ENCODE measurements at regions of chr4 and their contacts with region 1.

Region 1: GRCh38 chr4:76011700-76012387 is 4.5 kb upstream of the CXCL9 start:
- DNase-seq: peak; percentile 40
- H3K4me3 Mint-ChIP-seq: no peak overlapping the region
- H3K27ac Mint-ChIP-seq: no peak overlapping the region
- H3K4me1 Mint-ChIP-seq: peaks cover 6% of the 10 kb centered on the region
- H3K27me3 Mint-ChIP-seq: peaks cover 9% of the 10 kb centered on the region

Region 2: GRCh38 chr4:76028350-76028765 is 16.5 kb after region 1 on chr4:
- CTCF ChIA-PET with region 1: no interaction called
- intact Hi-C with region 1: loop called (anchors 1 kb)
- DNase-seq: no peak
- H3K4me3 Mint-ChIP-seq: peak overlapping the region; percentile 4
- H3K27ac Mint-ChIP-seq: no peak overlapping the region
- H3K4me1 Mint-ChIP-seq: peaks cover 31% of the 10 kb centered on the region
- H3K27me3 Mint-ChIP-seq: peaks cover 5% of the 10 kb centered on the region

Region 3: GRCh38 chr4:76036855-76037254 is 25.0 kb after region 1 on chr4:
- CTCF ChIA-PET with region 1: no interaction called
- intact Hi-C with region 1: loop called (anchors 1 kb)
- DNase-seq: no peak
- H3K4me3 Mint-ChIP-seq: no peak overlapping the region
- H3K27ac Mint-ChIP-seq: no peak overlapping the region
- H3K4me1 Mint-ChIP-seq: peaks cover 4% of the 10 kb centered on the region
- H3K27me3 Mint-ChIP-seq: peaks cover 4% of the 10 kb centered on the region

Region 4: DNA sequence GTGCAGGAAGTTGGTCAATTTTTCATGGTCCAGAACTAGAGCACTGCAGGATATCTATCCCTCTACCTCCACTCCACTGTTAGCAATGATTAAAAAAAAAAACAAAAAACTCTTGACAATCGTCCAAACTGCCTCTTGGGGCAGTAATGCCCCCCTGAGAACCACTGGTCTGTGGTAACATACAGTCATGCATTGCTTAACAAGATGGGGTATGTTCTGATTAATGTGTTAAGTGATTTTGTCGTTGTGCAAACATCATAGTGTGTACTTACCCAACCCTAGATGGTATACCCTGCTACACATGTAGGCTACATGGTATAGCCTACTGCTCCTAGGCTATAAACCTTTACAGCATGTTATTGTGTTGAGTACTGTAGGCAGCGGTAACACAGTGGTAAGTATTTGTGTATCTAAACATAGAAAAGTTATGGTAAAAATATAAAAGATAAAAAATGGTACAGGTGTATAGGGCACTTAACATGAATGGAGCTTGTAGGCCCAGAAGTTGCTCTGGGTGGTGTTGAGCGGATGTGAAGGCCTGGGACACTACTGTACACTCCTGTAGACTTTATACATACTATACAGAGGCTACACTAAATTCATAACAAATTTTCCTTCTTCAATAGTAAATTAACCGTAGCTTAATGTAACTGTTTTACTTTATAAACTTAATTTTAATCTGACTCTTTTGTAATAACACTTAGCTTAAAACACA is 96.8 kb after region 1 on chr4:
- CTCF ChIA-PET with region 1: no interaction called
- intact Hi-C with region 1: no loop called
- DNase-seq: no peak
- H3K4me3 Mint-ChIP-seq: no peak overlapping the region
- H3K27ac Mint-ChIP-seq: no peak overlapping the region
- H3K4me1 Mint-ChIP-seq: no peaks in the 10 kb centered on the region
- H3K27me3 Mint-ChIP-seq: no peaks in the 10 kb centered on the region